Colonic mucosa (tissue), 4 donors: ENCODE measurements at regions of chr5 and their contacts with region 1.

Region 1: DNA sequence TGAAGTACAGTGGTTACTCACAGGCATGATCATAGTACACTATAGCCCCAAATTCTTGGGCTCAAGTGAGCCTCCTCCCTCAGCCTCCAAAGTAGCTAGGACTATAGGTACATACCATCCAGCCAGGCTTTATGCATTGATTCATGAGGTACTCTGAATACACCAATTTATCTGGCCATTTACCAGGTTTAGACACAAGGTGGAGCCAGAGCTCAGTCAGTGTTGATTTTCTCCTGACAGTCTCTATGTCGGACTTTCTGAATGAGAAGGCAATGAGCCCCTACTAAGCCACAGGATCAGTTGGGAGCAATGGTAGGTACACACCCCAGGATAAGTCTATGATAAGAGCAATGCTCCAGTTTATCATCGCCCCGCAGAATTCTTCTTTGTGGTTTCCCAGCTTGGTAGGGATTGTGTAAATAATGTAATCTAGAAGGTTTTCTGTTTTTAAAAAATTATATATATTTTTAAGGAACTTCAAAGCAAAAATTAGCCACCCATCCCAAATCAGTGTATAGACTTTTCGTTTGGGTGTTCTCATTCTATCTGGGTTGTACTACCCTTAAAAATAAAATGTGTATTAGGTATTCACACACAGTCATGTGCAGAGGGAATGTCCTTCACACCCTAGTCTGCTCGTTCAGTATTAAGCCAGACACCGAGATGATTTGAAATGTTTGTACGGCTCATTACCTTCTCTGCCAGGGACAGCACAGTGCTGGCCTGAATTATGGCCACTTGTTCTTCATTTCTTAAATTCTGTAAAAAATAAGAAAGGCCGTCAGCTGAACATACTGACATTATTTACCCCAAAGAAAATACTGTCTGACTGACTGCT is 118.4 kb upstream of the DPYSL3 start:
- DNase-seq: peak; percentile 75
- H3K4me3 ChIP-seq: no peak overlapping the region
- H3K27ac ChIP-seq: no peak overlapping the region
- H3K4me1 ChIP-seq: no peaks in the 10 kb centered on the region
- H3K27me3 ChIP-seq: no peaks in the 10 kb centered on the region
- CTCF ChIP-seq: peak; percentile 61

Region 2: GRCh38 chr5:147339313-147339712 is 289.0 kb before region 1 on chr5:
- intact Hi-C with region 1: no loop called
- DNase-seq: no peak
- H3K4me3 ChIP-seq: no peak overlapping the region
- H3K27ac ChIP-seq: no peak overlapping the region
- H3K4me1 ChIP-seq: no peaks in the 10 kb centered on the region
- H3K27me3 ChIP-seq: no peaks in the 10 kb centered on the region
- CTCF ChIP-seq: no peak

Region 3: DNA sequence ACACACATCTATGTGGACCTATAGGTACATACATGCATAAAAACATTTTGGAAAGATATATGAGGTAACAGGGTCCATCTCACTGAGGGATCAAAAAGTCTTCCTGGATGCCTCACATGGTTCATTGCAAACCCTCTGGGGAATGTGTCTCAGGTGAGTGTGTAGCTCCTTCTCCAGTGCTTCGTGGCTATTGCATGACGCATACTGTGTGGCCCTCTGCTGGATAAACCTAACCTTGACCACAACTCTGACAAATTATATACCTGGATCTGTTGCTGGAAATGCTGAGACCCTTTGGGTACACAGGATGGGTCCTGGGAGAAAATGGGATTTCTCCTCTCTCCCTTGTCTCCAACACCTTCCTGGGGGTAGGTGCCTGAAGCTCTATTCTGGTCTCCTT is 62.3 kb after region 1 on chr5:
- intact Hi-C with region 1: loop called (anchors 5 kb)
- DNase-seq: no peak
- H3K4me3 ChIP-seq: no peak overlapping the region
- H3K27ac ChIP-seq: no peak overlapping the region
- H3K4me1 ChIP-seq: no peaks in the 10 kb centered on the region
- H3K27me3 ChIP-seq: no peaks in the 10 kb centered on the region
- CTCF ChIP-seq: no peak

Region 4: DNA sequence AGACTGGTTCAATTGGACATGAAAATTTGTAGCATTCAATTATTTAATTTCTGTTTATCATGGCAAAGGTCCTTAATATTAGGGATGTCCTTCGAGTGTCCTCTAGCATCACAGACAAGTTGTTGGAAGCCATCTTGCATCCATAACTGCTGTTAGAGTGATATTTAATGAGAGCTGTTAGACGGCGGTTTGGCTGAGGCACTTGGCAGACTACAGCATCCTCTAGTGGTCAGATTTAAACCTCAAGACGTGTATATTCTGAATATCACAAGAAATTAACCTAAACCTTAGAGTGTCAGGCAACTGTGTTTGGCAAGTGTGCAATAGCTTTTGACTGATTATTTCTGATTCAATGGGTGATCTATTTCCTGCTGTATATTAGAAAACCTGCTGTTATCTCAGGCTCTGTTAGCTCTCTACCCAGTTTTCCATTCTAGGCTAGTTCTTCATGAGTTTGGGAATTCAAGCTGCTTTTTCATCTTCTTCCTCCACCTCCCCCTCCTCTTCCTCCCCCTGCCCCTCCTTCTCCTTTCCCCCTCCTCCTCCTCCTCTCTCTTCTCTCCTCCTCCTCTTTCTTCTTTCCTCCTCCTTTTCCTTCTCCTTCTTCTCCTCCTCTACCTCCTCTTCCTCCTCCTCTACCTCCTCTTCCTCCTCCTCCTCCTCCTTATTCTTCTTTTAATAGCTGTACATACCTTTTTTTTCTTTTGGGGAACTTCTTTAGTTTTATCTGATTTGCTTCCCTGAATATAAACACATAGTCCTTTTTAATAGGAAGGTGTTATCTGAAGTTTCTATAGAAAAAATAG is 194.6 kb after region 1 on chr5:
- intact Hi-C with region 1: loop called (anchors 2 kb)
- DNase-seq: peak; percentile 50
- H3K4me3 ChIP-seq: no peak overlapping the region
- H3K27ac ChIP-seq: no peak overlapping the region
- H3K4me1 ChIP-seq: no peaks in the 10 kb centered on the region
- H3K27me3 ChIP-seq: no peaks in the 10 kb centered on the region
- CTCF ChIP-seq: peak; percentile 72

Region 5: GRCh38 chr5:147892821-147893232 is 264.6 kb after region 1 on chr5:
- intact Hi-C with region 1: no loop called
- DNase-seq: peak; percentile 73
- H3K4me3 ChIP-seq: no peak overlapping the region
- H3K27ac ChIP-seq: no peak overlapping the region
- H3K4me1 ChIP-seq: no peaks in the 10 kb centered on the region
- H3K27me3 ChIP-seq: no peaks in the 10 kb centered on the region
- CTCF ChIP-seq: no peak

Region 6: GRCh38 chr5:147935032-147935431 is 306.8 kb after region 1 on chr5:
- intact Hi-C with region 1: loop called (anchors 2 kb)
- DNase-seq: no peak
- H3K4me3 ChIP-seq: no peak overlapping the region
- H3K27ac ChIP-seq: no peak overlapping the region
- H3K4me1 ChIP-seq: no peaks in the 10 kb centered on the region
- H3K27me3 ChIP-seq: no peaks in the 10 kb centered on the region
- CTCF ChIP-seq: peak; percentile 33

Region 7: GRCh38 chr5:148084269-148084668 is 456.0 kb after region 1 on chr5:
- intact Hi-C with region 1: no loop called
- DNase-seq: no peak
- H3K4me3 ChIP-seq: no peak overlapping the region
- H3K27ac ChIP-seq: no peak overlapping the region
- H3K4me1 ChIP-seq: no peaks in the 10 kb centered on the region
- H3K27me3 ChIP-seq: no peaks in the 10 kb centered on the region
- CTCF ChIP-seq: no peak